Mammary epithelial cell (primary cell): ENCODE measurements at regions of chr6 and their contacts with region 1.

Region 1: DNA sequence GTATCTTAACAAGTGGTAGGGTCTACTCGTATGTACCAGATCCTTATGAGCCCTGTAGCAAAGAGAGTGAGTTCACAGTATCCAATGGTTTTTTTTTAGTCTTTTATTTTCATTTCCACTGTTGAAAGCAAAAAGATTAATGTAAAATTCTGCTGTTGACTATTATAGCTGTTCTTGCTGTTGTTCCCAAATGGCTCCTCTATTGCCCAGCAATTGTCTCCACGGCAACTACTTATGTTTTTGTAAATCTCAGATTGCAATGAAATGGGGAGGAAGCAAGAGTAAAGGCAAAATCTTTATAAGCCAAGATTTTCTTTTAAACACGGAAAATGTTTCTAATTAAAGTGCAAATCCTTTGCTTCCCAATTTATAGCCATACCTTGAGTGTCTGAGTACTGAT is 406.1 kb downstream of the EPM2A start:
- DNase-seq: no peak
- H3K4me3 ChIP-seq: no peak overlapping the region
- H3K27ac ChIP-seq: no peak overlapping the region
- H3K4me1 ChIP-seq: no peaks in the 10 kb centered on the region
- H3K27me3 ChIP-seq: peaks cover 12% of the 10 kb centered on the region
- CTCF ChIP-seq: no peak

Region 2: GRCh38 chr6:145225500-145225899 is 103.8 kb before region 1 on chr6:
- CTCF ChIA-PET with region 1: no interaction called
- dilution Hi-C with region 1: no loop called
- in situ Hi-C with region 1: no loop called
- intact Hi-C with region 1: no loop called
- DNase-seq: no peak
- H3K4me3 ChIP-seq: no peak overlapping the region
- H3K27ac ChIP-seq: no peak overlapping the region
- H3K4me1 ChIP-seq: no peaks in the 10 kb centered on the region
- H3K27me3 ChIP-seq: no peaks in the 10 kb centered on the region
- CTCF ChIP-seq: no peak

Region 3: DNA sequence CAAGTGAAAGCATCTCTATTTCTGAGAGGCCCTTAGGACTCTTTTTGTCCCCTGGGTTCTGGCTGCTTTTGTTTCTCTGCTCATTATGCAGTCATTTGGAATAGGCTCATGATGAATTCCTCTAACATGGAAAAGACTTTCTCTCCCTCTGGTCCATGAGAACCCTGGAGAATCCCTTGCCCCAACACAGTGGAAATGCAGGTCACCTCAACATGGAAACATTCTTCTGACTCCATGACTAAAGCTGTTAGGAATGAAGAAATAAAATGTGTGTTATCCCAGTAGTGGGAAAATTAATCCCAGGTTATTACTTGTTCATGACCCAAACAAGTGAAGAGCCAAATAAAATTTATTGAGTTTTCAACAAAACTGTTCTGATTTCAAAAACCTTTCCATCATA is 52.5 kb before region 1 on chr6:
- CTCF ChIA-PET with region 1: no interaction called
- dilution Hi-C with region 1: no loop called
- in situ Hi-C with region 1: no loop called
- intact Hi-C with region 1: no loop called
- DNase-seq: no peak
- H3K4me3 ChIP-seq: no peak overlapping the region
- H3K27ac ChIP-seq: no peak overlapping the region
- H3K4me1 ChIP-seq: no peaks in the 10 kb centered on the region
- H3K27me3 ChIP-seq: no peaks in the 10 kb centered on the region
- CTCF ChIP-seq: no peak

Region 4: DNA sequence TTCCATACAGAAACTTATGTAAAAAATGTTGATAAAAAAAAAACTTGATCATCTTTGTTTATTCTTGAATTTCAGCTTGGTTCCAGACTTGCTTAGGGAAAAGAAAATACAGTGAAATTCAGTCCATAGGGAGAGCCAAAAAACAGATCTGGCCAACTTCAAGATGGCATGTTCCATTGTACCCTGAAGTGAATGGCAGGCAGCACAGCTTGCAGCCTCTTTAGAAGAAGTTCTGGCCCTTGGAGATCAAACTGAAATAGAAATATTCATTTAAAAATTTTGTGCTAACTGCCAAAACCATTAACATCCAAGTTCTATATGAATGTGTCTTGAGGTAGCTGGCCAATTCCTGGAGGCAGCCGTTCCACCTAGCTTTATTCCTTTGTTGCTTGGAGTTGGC is 42.3 kb before region 1 on chr6:
- CTCF ChIA-PET with region 1: no interaction called
- dilution Hi-C with region 1: loop called (anchors 5 kb)
- in situ Hi-C with region 1: no loop called
- intact Hi-C with region 1: no loop called
- DNase-seq: no peak
- H3K4me3 ChIP-seq: no peak overlapping the region
- H3K27ac ChIP-seq: no peak overlapping the region
- H3K4me1 ChIP-seq: no peaks in the 10 kb centered on the region
- H3K27me3 ChIP-seq: peaks cover 4% of the 10 kb centered on the region
- CTCF ChIP-seq: no peak